Naive thymus-derived CD4-positive, alpha-beta T cell (primary cell): ENCODE measurements at regions of chr5 and their contacts with region 1.

Region 1: DNA sequence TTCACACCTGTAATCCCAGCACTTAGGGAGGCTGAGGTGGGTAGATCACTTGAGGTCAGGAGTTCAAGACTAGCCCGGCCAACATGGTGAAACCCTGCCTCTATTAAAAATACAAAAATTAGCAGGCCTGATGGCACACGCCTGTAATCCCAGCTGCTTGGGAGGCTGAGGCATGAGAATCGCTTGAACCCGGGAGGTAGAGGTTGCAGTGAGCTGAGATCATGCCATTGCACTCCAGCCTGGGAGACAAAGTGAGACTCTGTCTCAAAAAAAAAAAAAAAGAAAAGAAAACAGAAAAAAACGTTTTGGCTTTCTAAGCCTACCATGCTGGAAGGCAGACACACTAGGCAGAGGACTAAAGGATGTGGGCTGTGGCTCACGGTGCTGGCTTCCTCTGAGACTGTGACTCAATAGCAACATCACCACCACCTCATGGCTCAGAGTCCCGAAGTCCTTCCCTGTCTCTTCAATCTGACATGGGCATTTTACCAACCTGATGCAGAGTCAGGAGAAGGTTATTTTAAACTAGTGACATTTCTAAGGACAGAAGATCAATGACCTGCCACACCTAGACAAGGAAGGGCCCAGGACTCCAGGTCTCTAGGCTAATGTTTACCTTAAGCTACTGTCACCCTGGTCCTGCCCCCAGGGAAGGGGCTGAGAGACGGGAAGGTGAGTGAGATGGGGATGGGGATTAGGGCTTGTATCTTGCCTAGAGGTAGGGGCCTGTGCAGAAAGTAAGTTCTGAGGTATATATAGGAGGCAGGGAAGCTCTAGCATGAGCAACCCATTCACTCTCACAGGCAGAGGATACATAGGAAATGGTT is 3.8 kb downstream of the ECSCR start:
- DNase-seq: peak in 8 of 9 donors; percentile 71 to 89 (median 85)
- ATAC-seq: peak; percentile 98
- H3K4me3 ChIP-seq: peak overlapping the region; percentile 10
- H3K4me3 Mint-ChIP-seq: peak overlapping the region; percentile 38 to 86 (median 64)
- H3K27ac ChIP-seq: peak overlapping the region; percentile 73
- H3K27ac Mint-ChIP-seq: peak overlapping the region; percentile 89 to 98 (median 94)
- H3K4me1 ChIP-seq: peaks cover 35 to 49% of the 10 kb centered on the region in 2 donors
- H3K4me1 Mint-ChIP-seq: peaks cover 33 to 72% (median 64%) of the 10 kb centered on the region in 7 donors
- H3K27me3 ChIP-seq: no peaks in the 10 kb centered on the region
- H3K27me3 Mint-ChIP-seq: no peaks in the 10 kb centered on the region

Region 2: DNA sequence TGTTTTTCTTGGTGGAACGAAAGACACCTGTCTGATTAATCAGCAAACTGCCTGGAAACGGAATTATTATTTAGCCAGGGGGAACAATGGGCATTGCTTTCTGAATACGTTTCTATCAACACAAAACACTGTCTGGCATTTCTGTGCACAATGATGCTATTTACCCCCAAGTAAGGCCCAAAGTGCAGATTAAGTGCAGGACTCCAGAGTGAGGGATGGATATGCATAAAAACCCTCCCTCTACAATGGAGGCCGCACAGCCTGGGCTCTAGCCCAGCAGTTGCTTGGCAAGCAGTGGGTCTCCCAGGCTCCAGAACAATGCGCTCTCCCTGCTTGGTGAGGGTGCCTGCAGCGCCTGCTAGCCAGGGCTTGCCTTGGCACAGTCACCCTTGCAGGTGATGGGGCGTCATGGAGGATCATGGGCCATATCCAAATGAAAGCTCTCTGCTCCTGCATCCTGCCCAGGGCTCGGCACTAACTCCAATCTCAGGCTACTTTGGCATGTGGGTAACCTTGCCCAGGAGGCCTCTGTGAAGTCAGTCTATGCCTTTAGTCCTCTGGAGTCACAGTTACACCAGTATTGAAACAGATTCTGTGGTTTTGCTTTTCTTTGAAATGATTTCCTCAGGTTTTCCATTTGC is 43.5 kb before region 1 on chr5:
- CTCF ChIA-PET with region 1: no interaction called
- POLR2A ChIA-PET with region 1: no interaction called
- intact Hi-C with region 1: loop called in 1 of 2 experiments (anchors 2 kb)
- DNase-seq: no peak
- ATAC-seq: no peak
- H3K4me3 ChIP-seq: no peak overlapping the region
- H3K4me3 Mint-ChIP-seq: peak overlapping the region in 5 of 10 donors; percentile 25 to 83 (median 37)
- H3K27ac ChIP-seq: no peak overlapping the region
- H3K27ac Mint-ChIP-seq: peak overlapping the region in 5 of 9 donors; percentile 7 to 93 (median 27)
- H3K4me1 ChIP-seq: peaks cover 0 to 17% of the 10 kb centered on the region in 2 donors
- H3K4me1 Mint-ChIP-seq: peaks cover 2 to 71% (median 25%) of the 10 kb centered on the region in 7 donors
- H3K27me3 ChIP-seq: no peaks in the 10 kb centered on the region
- H3K27me3 Mint-ChIP-seq: no peaks in the 10 kb centered on the region

Region 3: GRCh38 chr5:139446956-139447779 is 11.6 kb before region 1 on chr5:
- CTCF ChIA-PET with region 1: no interaction called
- POLR2A ChIA-PET with region 1: interaction called, 15 read pairs
- intact Hi-C with region 1: loop called (anchors 1 kb)
- DNase-seq: no peak
- ATAC-seq: no peak
- H3K4me3 ChIP-seq: no peak overlapping the region
- H3K4me3 Mint-ChIP-seq: peak overlapping the region in 1 of 10 donors; percentile 56
- H3K27ac ChIP-seq: no peak overlapping the region
- H3K27ac Mint-ChIP-seq: peak overlapping the region in 4 of 9 donors; percentile 45 to 86 (median 80)
- H3K4me1 ChIP-seq: peaks cover 25 to 30% of the 10 kb centered on the region in 2 donors
- H3K4me1 Mint-ChIP-seq: peaks cover 23 to 61% (median 49%) of the 10 kb centered on the region in 7 donors
- H3K27me3 ChIP-seq: no peaks in the 10 kb centered on the region
- H3K27me3 Mint-ChIP-seq: no peaks in the 10 kb centered on the region

Region 4: DNA sequence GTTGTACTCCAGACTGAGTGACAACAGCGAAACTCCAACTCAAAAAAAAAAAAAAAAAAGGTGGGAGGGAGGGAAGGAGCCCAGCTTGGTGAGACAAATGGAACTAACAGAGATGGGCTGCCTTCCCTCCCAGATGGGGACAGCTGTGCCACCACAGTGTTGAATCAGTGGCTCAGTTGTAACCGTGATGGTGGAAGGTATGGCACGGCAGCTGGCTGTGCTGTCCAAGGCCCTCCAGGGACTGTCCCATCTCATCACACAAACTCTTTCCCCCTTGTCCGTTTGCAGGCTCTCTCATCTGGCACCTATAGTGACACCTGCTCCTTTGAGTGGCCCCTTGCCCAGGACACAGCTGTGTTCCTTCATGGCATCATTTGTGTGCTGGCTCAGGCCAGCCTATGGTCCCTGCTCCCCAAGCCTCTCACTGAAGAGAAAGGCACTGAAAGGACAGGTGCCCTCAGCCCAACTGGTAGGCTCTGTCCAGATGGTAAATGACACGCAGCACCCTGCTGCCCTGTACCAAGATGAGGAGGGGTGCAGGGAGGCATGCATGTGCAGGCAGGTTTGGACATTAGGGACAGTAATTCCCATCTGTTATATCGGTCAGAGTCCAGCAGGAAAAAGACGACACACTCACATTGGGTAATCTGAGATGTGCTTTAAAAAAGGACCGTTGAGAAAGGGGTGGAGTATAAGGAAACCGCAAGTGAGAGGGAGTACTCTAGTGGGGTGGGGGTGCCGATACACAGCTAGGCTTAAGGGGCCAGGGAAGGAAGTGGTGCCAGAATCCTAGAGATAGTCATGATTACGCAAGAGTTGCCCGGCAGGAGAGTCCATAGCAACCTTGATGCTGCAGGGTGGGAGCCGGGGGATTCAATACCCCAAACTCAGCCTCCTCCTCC is 16.3 kb after region 1 on chr5:
- CTCF ChIA-PET with region 1: interaction called, 5 read pairs
- POLR2A ChIA-PET with region 1: interaction called, 36 read pairs
- intact Hi-C with region 1: loop called (anchors 1 to 2 kb)
- DNase-seq: peak in 4 of 9 donors; percentile 40 to 48 (median 44)
- ATAC-seq: peak; percentile 74
- H3K4me3 ChIP-seq: peak overlapping the region; percentile 42
- H3K4me3 Mint-ChIP-seq: peak overlapping the region; percentile 49 to 97 (median 68)
- H3K27ac ChIP-seq: peak overlapping the region; percentile 64
- H3K27ac Mint-ChIP-seq: peak overlapping the region; percentile 30 to 98 (median 88)
- H3K4me1 ChIP-seq: peaks cover 37 to 76% of the 10 kb centered on the region in 2 donors
- H3K4me1 Mint-ChIP-seq: peaks cover 60 to 92% (median 80%) of the 10 kb centered on the region in 7 donors
- H3K27me3 ChIP-seq: no peaks in the 10 kb centered on the region
- H3K27me3 Mint-ChIP-seq: no peaks in the 10 kb centered on the region

Region 5: DNA sequence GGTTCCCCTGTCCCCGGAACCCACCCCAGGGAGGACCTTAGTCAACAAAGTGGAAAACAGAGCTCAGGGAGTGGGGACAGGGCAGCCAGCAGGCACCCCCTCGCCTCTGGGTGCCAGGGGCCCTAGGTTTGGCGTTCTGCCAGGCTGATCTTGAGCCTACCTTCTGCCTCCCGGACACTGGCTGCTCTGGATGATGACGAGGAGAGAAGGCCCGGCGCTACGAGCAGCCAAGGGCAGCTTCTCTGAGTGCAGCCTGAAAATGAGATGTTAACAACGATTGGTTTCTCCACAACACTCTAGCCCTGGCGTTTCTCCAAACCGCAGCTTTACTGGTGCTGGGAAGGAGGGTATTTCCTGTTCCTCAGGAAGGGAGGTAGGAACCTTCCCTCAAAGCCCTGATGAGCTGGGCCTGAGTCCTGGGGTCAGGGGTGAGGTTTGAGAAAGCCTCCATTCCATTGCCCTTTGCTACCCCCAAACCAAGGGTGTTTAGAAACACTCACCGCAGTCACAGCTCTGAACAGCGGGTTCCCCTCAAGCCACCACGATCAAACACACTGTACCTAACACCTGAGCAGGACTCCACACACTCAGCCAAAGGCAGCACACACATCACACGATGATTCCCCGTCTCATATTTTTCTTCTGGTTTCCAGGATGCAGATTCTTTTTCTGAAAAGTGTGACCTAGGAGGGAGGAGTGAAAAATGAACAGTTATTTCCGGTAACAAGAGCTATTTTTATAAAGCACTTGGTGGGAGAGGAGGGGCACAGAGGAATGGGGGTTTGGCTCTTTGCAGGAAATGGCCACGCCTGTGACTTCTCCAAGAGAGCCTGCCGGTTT is 23.5 kb after region 1 on chr5 and contains the start of gene STING1:
- CTCF ChIA-PET with region 1: interaction called, 6 read pairs
- POLR2A ChIA-PET with region 1: interaction called, 25 read pairs
- intact Hi-C with region 1: loop called (anchors 1 kb)
- DNase-seq: peak; percentile 29 to 83 (median 71)
- ATAC-seq: peak; percentile 86
- H3K4me3 ChIP-seq: peak within 1 kb of the TSS; percentile 87
- H3K4me3 Mint-ChIP-seq: peak within 1 kb of the TSS; percentile 86 to 99 (median 94)
- H3K27ac ChIP-seq: peak within 1 kb of the TSS; percentile 80
- H3K27ac Mint-ChIP-seq: peak within 1 kb of the TSS; percentile 94 to 99 (median 96)
- H3K4me1 ChIP-seq: peaks cover 21 to 29% of the 10 kb centered on the region in 2 donors
- H3K4me1 Mint-ChIP-seq: peaks cover 26 to 45% (median 39%) of the 10 kb centered on the region in 7 donors
- H3K27me3 ChIP-seq: no peaks in the 10 kb centered on the region
- H3K27me3 Mint-ChIP-seq: no peaks in the 10 kb centered on the region
- total RNA-seq, gene STING1: 124 to 213 (median 130) TPM